OCI-LY7 (cell line): ENCODE measurements at regions of chr6 and their contacts with region 1.

Region 1: GRCh38 chr6:14228571-14228970 is 111.0 kb downstream of the CD83 start:
- DNase-seq: peak; percentile 79
- H3K4me3 ChIP-seq: no peak overlapping the region
- H3K27ac ChIP-seq: peak overlapping the region; percentile 48
- H3K4me1 ChIP-seq: peaks cover 63% of the 10 kb centered on the region
- CTCF ChIP-seq: no peak

Region 2: DNA sequence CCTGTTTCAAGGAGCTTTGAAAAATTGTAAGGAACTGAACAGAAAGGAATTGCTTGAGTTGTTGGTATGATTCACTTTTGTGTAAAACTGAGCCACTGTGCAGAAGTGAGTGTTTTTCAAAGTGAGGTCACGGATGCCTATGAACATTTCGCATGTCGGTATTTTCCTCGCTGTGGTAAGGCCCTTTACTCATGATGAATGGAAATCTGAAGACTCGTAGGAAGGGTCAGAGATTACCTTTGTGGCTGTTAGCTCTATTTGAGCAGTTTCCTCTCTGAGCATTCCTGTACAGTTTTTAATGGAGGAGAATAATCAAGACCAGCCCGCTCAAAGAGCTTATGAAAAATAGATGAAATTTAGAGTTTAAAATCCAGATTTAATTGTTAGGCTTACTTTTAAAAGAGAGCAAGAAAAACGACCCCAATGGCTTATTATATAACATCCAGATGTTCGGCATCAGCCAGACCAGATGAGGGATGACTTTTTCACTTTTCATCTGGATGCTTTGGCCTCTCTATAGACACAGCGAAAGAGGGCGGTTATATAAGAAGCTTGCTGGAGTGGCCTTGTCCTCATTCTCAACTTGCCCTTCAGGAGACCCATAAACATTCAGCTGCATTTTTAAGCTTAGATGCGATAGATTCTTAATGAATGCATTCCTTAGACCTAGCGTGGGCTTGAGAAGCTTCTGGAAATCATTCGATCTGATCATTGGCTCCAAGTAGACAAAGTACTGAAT is 11.5 kb before region 1 on chr6:
- CTCF ChIA-PET with region 1: interaction called, 3 read pairs
- POLR2A ChIA-PET with region 1: interaction called, 11 read pairs
- intact Hi-C with region 1: no loop called
- DNase-seq: no peak
- H3K4me3 ChIP-seq: no peak overlapping the region
- H3K27ac ChIP-seq: no peak overlapping the region
- H3K4me1 ChIP-seq: peaks cover 33% of the 10 kb centered on the region
- CTCF ChIP-seq: no peak

Region 3: DNA sequence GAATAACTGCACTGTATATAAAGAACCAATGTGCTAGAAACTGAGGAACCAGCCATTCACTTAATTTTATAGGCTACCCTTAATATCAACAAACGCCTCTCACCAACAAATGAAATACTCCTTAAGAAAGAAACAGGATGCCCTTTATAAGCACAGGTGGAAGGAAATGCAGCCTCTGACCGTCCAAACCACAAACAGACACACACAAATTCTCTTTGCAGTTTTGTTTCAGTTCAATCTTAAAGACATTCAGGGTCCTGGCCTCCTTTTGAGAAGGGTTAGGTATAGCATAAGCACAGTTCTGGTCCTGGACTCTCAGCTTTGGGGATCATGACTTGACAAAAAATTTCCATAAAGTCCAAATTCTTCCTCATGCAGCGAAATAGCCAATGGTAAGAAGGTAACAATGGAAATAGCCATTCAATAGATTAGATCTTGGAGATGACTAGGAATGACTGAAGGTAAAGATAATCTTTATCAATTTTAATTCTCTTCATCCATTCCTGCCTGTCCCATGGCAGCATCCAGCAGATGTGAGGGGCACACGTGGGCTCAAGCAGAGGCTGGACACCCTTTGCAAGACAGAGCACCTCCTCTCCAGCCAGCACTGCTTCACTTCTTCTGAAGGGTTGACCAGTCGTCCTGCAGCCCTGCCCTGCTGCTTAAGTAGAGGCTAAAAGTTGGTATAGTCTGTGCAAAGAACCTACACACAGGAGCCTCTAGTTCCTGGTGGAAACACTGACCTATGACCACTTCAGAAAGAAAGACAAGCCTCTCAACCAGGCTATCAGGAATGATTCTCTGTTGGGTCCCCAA is 12.9 kb after region 1 on chr6:
- CTCF ChIA-PET with region 1: interaction called, 3 read pairs
- POLR2A ChIA-PET with region 1: interaction called, 58 read pairs
- intact Hi-C with region 1: no loop called
- DNase-seq: peak; percentile 95
- H3K4me3 ChIP-seq: peak overlapping the region; percentile 56
- H3K27ac ChIP-seq: peak overlapping the region; percentile 100
- H3K4me1 ChIP-seq: peaks cover 95% of the 10 kb centered on the region
- CTCF ChIP-seq: no peak

Region 4: DNA sequence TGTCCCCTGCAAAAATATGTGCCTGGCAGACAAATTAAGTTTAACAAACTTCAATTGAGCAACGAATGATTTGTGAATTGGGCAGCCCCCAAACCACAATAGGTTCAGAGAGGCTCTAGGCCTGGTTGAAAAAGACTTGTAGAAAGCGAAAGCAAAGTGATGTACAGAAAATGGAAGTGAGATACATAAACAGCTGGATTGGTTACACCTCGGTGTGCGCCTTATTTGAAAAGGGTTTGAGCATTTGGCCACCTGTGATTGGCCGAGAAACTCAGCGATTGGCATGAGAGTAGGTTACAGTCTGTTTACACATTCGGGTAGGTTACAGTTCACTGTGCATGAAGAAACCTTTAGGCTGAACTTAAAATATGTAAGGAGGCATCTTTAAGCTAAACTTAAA is 25.9 kb after region 1 on chr6:
- CTCF ChIA-PET with region 1: no interaction called
- POLR2A ChIA-PET with region 1: interaction called, 11 read pairs
- intact Hi-C with region 1: no loop called
- DNase-seq: peak; percentile 88
- H3K4me3 ChIP-seq: peak overlapping the region; percentile 25
- H3K27ac ChIP-seq: peak overlapping the region; percentile 73
- H3K4me1 ChIP-seq: peaks cover 63% of the 10 kb centered on the region
- CTCF ChIP-seq: no peak

Region 5: GRCh38 chr6:14276667-14277404 is 48.3 kb after region 1 on chr6:
- CTCF ChIA-PET with region 1: no interaction called
- POLR2A ChIA-PET with region 1: interaction called, 8 read pairs
- intact Hi-C with region 1: loop called (anchors 5 kb)
- DNase-seq: peak; percentile 89
- H3K4me3 ChIP-seq: peak overlapping the region; percentile 44
- H3K27ac ChIP-seq: peak overlapping the region; percentile 95
- H3K4me1 ChIP-seq: peaks cover 60% of the 10 kb centered on the region
- CTCF ChIP-seq: no peak

Region 6: DNA sequence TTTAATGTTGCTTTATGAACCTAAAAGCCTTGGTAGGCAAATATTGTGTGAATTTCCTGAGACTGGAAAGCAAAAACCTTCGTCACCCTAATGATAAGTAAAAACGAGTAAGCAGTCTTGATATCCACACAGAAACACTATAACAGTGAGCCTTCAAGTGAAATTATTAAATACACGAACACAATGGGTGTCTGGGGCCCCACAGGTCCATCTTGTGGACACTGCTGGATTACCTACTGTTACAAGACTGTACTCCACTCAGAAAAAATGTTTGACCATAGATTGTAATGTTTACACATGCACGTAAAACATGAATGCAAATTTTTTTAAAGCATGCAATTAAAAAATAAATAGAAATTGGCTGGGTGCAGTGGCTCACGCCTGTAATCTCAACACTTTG is 355.9 kb after region 1 on chr6:
- CTCF ChIA-PET with region 1: no interaction called
- POLR2A ChIA-PET with region 1: no interaction called
- intact Hi-C with region 1: no loop called
- DNase-seq: no peak
- H3K4me3 ChIP-seq: no peak overlapping the region
- H3K27ac ChIP-seq: no peak overlapping the region
- H3K4me1 ChIP-seq: peaks cover 2% of the 10 kb centered on the region
- CTCF ChIP-seq: 0 out of 2 replicates have a peak, but pooled peaks have one; percentile 19